Dorsolateral prefrontal cortex (tissue), 120 donors: ENCODE measurements at regions of chr5 and their contacts with region 1.

Region 1: GRCh38 chr5:64768358-64769312 is at the starts of genes CWC27 and SREK1IP1:
- DNase-seq: peak; percentile 55 to 84 (median 79)
- H3K4me3 ChIP-seq: peak within 1 kb of the TSS; percentile 67 to 99 (median 89)
- H3K27ac ChIP-seq: peak within 1 kb of the TSS; percentile 53 to 96 (median 89)
- H3K27me3 ChIP-seq: no peaks in the 10 kb centered on the region
- CTCF ChIP-seq: peak in 39 of 56 donors; percentile 8 to 61 (median 29)
- total RNA-seq, gene CWC27: 20.1 to 36.7 (median 27.0) TPM
- total RNA-seq, gene SREK1IP1: 8.4 to 22.4 (median 14.4) TPM

Region 2: GRCh38 chr5:64634997-64635686 is 133.5 kb before region 1 on chr5:
- intact Hi-C with region 1: loop called in 1 of 2 experiments (anchors 5 kb)
- DNase-seq: no peak
- H3K4me3 ChIP-seq: no peak overlapping the region
- H3K27ac ChIP-seq: no peak overlapping the region
- H3K27me3 ChIP-seq: peaks cover 0 to 6% (median 0%) of the 10 kb centered on the region in 45 donors
- CTCF ChIP-seq: peak; percentile 68 to 96 (median 85)

Region 3: GRCh38 chr5:64700765-64701164 is 67.9 kb before region 1 on chr5:
- intact Hi-C with region 1: no loop called
- DNase-seq: no peak
- H3K4me3 ChIP-seq: no peak overlapping the region
- H3K27ac ChIP-seq: no peak overlapping the region
- H3K27me3 ChIP-seq: peaks cover 0 to 5% (median 0%) of the 10 kb centered on the region in 45 donors
- CTCF ChIP-seq: no peak

Region 4: DNA sequence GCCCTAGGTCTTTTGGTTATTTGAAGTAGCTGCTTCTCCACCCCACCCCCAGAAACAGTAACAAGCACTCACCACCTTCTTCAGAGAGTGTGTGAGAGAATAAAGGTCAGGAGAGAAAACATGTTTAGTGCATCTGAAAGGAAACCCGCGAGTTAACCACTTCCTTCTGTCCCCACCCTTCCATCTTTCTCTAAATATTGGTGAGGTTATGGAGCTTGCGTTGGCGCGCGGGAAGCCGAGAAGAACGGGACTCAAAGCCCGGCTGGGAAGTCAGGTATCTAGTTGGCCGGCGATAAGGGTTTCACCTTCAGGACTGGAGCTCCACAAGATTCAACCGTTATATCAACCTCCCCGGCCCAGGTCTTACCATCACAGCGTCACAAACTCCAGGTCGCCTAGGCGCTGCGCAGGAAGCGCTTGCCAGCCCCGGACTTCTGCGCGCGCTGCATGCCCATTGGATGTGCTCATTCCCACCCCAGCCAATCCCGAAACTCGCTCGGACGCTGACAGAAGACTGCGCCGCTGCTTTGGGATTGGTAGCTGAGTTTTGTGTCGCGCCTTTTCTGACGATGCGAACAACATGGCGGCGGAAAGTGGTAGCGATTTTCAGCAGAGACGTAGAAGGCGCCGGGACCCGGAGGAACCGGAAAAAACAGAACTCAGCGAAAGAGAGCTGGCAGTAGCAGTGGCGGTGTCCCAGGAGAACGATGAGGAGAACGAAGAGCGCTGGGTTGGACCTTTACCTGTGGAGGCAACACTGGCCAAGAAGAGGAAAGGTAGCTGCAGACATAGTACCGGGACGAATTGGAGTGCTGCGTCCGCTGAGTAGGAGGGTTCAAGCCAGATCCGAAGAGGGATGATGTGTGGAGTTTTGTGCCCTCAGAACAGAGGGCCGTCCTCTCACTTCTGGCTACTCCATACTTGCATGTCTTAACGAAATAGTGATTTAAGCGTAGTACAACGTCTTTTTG is 794.4 kb after region 1 on chr5 and contains the starts of genes CENPK and PPWD1:
- intact Hi-C with region 1: loop called in 1 of 2 experiments (anchors 5 kb)
- DNase-seq: peak; percentile 88 to 96 (median 94)
- H3K4me3 ChIP-seq: peak within 1 kb of the TSS; percentile 62 to 100 (median 89)
- H3K27ac ChIP-seq: peak within 1 kb of the TSS in 58 of 59 donors; percentile 26 to 95 (median 84)
- H3K27me3 ChIP-seq: no peaks in the 10 kb centered on the region
- CTCF ChIP-seq: peak in 25 of 56 donors; percentile 7 to 46 (median 20)
- total RNA-seq, gene CENPK: 0.35 to 4.6 (median 1.6) TPM in 107 of 120 experiments, not detected in the others
- total RNA-seq, gene PPWD1: 28.2 to 67.8 (median 45.2) TPM